Aorta (tissue), 5 donors: ENCODE measurements at regions of chr11 and their contacts with region 1.

Region 1: GRCh38 chr11:129364143-129364654 is 11.4 kb upstream of the BARX2 start:
- DNase-seq: peak; percentile 77 to 88
- ATAC-seq: peak; percentile 85
- H3K4me3 ChIP-seq: no peak overlapping the region
- H3K27ac ChIP-seq: no peak overlapping the region
- H3K4me1 ChIP-seq: no peaks in the 10 kb centered on the region
- H3K27me3 ChIP-seq: no peaks in the 10 kb centered on the region

Region 2: DNA sequence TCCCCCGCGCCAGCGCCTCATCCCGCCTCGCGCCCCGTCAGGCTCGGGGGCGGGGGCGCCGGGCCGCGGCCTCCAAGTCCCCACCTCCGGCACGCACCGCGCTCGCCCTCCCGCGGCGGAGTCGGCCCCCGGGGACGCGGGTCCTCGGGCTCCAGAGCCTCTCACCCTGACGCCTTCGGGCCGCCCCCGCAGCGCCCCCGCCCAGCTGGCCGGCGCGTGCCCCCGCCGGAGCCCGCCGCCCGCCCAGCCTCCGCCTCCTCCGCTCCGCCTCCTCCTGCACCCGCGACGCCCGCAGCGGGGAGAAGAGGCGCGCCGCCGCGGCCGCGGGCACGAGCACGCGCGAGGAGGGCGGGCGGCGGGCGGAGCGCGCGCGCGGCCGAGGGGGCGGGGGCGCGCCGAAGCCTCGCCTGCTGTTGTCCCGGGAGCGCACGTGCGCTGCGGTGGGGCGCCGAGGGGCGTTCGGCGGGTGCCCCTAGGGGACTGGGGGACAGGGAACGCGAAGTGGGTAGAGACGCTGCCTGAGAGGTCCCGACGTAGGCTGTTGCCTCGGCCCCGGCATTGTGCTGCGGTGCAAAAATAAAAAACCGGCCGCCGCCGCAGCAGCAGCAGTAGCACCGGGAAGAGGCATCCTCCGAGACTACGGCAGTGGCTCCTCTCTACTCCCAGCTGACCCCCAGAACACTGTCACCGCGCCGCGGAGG is 84.7 kb before region 1 on chr11:
- intact Hi-C with region 1: no loop called
- DNase-seq: peak; percentile 84 to 93
- ATAC-seq: peak; percentile 93
- H3K4me3 ChIP-seq: peak overlapping the region; percentile 92 to 99
- H3K27ac ChIP-seq: no peak overlapping the region
- H3K4me1 ChIP-seq: no peaks in the 10 kb centered on the region
- H3K27me3 ChIP-seq: no peaks in the 10 kb centered on the region

Region 3: GRCh38 chr11:129743111-129743815 is 379.1 kb after region 1 on chr11:
- intact Hi-C with region 1: loop called in 1 of 2 experiments (anchors 10 kb)
- DNase-seq: no peak
- ATAC-seq: no peak
- H3K4me3 ChIP-seq: no peak overlapping the region
- H3K27ac ChIP-seq: no peak overlapping the region
- H3K4me1 ChIP-seq: no peaks in the 10 kb centered on the region
- H3K27me3 ChIP-seq: peaks cover 0 to 1% of the 10 kb centered on the region in 2 donors

Region 4: DNA sequence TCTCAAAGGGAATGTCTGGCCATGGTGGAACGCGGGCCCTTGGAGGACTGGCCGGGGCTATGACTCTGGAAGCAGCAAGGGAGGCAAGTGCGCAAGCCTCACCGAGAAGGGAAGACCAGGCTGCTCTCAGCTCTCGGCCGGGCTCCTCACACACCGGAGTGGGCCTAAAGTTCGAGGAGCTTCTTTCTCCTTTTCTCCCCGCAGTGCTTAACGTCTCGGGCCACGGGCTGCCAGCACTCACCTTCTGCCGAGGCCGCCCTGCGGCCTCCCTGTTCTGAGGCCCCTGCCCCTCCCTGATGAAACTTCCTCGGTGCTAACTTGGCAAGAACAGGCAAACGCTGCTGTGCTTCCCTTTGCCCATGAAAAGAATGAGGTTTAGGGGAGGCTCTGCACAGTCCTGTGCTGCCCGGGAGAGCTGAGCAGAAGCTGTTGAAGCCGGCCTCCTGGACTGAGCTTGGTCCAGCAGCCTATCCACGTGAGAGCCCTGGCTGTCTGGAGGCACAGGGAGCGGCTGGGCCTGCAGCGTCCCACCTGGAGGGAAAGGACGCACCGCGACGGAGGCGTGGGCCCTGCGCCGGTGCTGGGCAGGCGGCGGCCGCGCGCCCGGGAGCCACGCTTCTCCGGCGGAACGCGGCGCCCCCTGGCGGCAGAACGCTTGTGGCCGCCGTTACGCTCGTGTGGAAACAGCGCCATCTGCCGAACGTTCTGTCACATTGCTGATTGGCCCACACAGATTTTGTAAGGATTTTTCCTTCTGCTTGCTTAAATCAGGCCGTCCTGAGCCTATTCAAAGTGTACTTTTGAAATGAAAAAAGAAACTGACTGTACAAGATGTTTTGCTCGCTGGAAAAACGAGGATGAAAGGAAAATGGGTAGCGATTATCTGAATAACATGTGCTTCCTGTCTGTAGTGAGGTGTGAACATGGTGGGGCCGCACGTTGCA is 386.4 kb after region 1 on chr11:
- intact Hi-C with region 1: loop called (anchors 2 to 10 kb)
- DNase-seq: peak; percentile 77 to 90
- ATAC-seq: peak; percentile 96
- H3K4me3 ChIP-seq: no peak overlapping the region
- H3K27ac ChIP-seq: no peak overlapping the region
- H3K4me1 ChIP-seq: no peaks in the 10 kb centered on the region
- H3K27me3 ChIP-seq: no peaks in the 10 kb centered on the region